Heart left ventricle (tissue), 16 donors: ENCODE measurements at regions of chr3 and their contacts with region 1.

Region 1: GRCh38 chr3:129001101-129001816 is at the start of gene EFCC1:
- DNase-seq: peak; percentile 79 to 87 (median 86)
- ATAC-seq: peak; percentile 68 to 89 (median 86)
- H3K4me3 ChIP-seq: peak within 1 kb of the TSS; percentile 27 to 84 (median 76)
- H3K27ac ChIP-seq: peak within 1 kb of the TSS; percentile 51 to 95 (median 84)
- H3K4me1 ChIP-seq: peaks cover 3 to 59% (median 25%) of the 10 kb centered on the region in 12 donors
- H3K27me3 ChIP-seq: peaks cover 0 to 53% (median 14%) of the 10 kb centered on the region in 9 donors
- CTCF ChIP-seq: peak in 1 of 12 donors; percentile 10
- POLR2A ChIP-seq: peak in 1 of 2 donors; percentile 56
- total RNA-seq, gene EFCC1: 0.60 to 2.5 (median 1.7) TPM

Region 2: GRCh38 chr3:129026728-129027543 is 25.7 kb after region 1 on chr3:
- intact Hi-C with region 1: loop called in 1 of 10 experiments (anchors 2 kb)
- DNase-seq: peak; percentile 91 to 95 (median 94)
- ATAC-seq: peak; percentile 87 to 96 (median 90)
- H3K4me3 ChIP-seq: peak overlapping the region; percentile 27 to 68 (median 57)
- H3K27ac ChIP-seq: peak overlapping the region in 11 of 12 donors; percentile 35 to 85 (median 74)
- H3K4me1 ChIP-seq: peaks cover 0 to 55% (median 35%) of the 10 kb centered on the region in 12 donors
- H3K27me3 ChIP-seq: no peaks in the 10 kb centered on the region
- CTCF ChIP-seq: peak; percentile 47 to 95 (median 74)
- POLR2A ChIP-seq: peak in 1 of 2 donors; percentile 78